Psoas muscle (tissue), 8 donors: ENCODE measurements at regions of chr6 and their contacts with region 1.

Region 1: DNA sequence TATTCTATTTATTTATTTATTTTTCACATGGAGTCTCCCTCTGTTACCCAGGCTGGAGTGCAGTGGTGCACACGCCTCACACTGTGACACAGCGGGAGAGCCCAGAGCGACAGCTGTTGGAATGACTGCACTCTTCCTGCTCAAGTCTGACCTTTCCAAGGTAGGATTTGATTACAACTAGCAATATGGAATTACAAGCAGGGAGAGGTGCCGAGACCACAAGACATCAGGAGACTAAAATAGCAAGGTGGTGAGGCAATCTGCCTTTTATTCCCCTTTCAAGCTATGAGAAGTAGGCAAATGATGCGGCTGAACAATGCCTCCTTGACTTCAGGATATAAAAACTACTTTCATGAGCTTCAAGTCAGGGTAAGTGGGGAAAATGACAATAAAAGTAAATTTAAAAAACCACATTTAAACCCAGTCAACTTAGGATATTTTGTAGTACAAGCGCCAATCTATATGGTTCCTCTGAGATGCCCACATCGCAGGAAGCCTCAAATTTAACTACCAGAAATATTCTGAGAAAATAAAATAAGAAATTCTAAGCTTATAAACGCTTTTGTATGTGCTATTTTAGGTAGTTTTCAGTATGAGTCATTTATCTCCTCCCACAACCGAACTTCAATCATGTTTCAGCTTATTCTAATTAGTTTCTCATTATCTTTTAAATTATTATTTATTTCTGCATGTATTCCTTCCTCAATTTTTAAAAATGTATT is 146.9 kb upstream of the SGK1 start:
- DNase-seq: peak; percentile 42 to 84
- ATAC-seq: peak; percentile 92 to 98 (median 95)
- H3K4me3 ChIP-seq: no peak overlapping the region
- H3K27ac ChIP-seq: peak overlapping the region; percentile 87
- H3K4me1 ChIP-seq: peaks cover 50% of the 10 kb centered on the region
- H3K27me3 ChIP-seq: no peaks in the 10 kb centered on the region
- CTCF ChIP-seq: no peak

Region 2: DNA sequence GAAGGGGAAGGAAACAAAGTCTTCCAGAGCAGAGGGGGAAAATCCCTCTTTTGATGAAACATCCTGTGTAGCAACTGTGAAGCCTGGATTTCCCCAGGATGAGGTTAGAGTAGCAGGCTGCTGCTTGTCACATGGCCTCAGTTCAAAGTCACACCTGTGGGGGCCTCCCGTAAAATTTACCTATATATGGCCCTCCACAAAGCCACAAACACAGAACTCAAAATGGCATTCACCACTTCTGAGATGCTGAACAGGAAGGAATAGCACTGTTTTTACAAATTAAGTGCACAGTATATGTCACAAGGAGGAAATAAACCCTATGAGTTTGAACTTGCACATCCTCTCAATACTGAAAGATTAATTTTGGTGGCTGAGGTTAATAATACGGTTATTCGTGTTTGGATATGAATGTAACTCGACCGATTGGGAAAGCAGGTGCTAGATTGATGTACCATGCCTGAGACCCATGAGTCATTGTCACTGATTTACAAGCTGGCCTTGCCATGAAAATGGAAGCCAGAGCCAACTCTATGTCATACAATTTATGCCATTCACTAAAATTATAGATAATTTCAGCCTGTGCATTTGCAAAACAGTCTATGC is 217.5 kb before region 1 on chr6:
- intact Hi-C with region 1: loop called in 1 of 2 experiments (anchors 5 kb)
- DNase-seq: no peak
- ATAC-seq: peak; percentile 91 to 96 (median 93)
- H3K4me3 ChIP-seq: no peak overlapping the region
- H3K27ac ChIP-seq: peak overlapping the region; percentile 83
- H3K4me1 ChIP-seq: peaks cover 31% of the 10 kb centered on the region
- H3K27me3 ChIP-seq: no peaks in the 10 kb centered on the region
- CTCF ChIP-seq: no peak

Region 3: GRCh38 chr6:134347916-134348805 is 116.7 kb before region 1 on chr6:
- intact Hi-C with region 1: loop called (anchors 1 to 5 kb)
- DNase-seq: peak; percentile 72 to 75
- ATAC-seq: peak; percentile 78 to 81 (median 79)
- H3K4me3 ChIP-seq: peak overlapping the region; percentile 48
- H3K27ac ChIP-seq: peak overlapping the region; percentile 92
- H3K4me1 ChIP-seq: peaks cover 37% of the 10 kb centered on the region
- H3K27me3 ChIP-seq: no peaks in the 10 kb centered on the region
- CTCF ChIP-seq: no peak

Region 4: DNA sequence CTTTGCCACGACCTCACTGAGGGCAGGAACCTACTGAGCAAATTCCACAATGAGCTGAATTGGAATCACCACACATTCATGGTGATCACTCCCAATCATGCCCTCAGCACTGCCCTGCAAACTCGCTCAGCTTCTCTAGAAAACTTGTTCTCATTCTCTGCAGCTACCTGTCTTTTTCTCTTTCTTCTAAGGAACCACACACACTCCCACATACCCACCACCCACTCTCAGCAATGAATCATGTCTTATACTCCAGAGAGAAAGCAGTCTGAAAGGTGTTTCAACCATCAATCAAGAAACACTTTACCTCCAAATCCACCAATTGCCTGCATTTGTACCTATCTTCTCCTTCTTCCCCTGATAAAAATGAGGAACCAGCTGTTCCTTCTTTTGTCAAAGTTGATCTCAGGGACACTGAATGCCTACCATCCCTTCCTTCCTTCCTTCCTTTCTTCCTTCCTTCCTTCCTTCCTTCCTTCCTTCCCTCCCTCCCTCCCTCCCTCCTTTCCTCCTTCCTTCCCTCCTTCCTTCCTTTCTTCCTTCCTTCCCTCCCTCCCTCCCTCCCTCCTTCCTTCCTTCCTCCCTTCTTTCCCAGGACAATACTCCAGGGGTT is 62.4 kb before region 1 on chr6:
- intact Hi-C with region 1: loop called in 1 of 2 experiments (anchors 5 kb)
- DNase-seq: no peak
- ATAC-seq: no peak
- H3K4me3 ChIP-seq: no peak overlapping the region
- H3K27ac ChIP-seq: peak overlapping the region; percentile 54
- H3K4me1 ChIP-seq: peaks cover 13% of the 10 kb centered on the region
- H3K27me3 ChIP-seq: no peaks in the 10 kb centered on the region
- CTCF ChIP-seq: no peak

Region 5: GRCh38 chr6:134529921-134530320 is 65.1 kb after region 1 on chr6:
- intact Hi-C with region 1: loop called in 1 of 2 experiments (anchors 5 kb)
- DNase-seq: no peak
- ATAC-seq: no peak
- H3K4me3 ChIP-seq: no peak overlapping the region
- H3K27ac ChIP-seq: no peak overlapping the region
- H3K4me1 ChIP-seq: peaks cover 22% of the 10 kb centered on the region
- H3K27me3 ChIP-seq: no peaks in the 10 kb centered on the region
- CTCF ChIP-seq: no peak

Region 6: GRCh38 chr6:134640975-134641429 is 176.2 kb after region 1 on chr6:
- intact Hi-C with region 1: loop called (anchors 5 kb)
- DNase-seq: peak; percentile 76 to 86
- ATAC-seq: peak; percentile 95 to 98 (median 96)
- H3K4me3 ChIP-seq: no peak overlapping the region
- H3K27ac ChIP-seq: peak overlapping the region; percentile 75
- H3K4me1 ChIP-seq: peaks cover 20% of the 10 kb centered on the region
- H3K27me3 ChIP-seq: no peaks in the 10 kb centered on the region
- CTCF ChIP-seq: peak; percentile 97

Region 7: DNA sequence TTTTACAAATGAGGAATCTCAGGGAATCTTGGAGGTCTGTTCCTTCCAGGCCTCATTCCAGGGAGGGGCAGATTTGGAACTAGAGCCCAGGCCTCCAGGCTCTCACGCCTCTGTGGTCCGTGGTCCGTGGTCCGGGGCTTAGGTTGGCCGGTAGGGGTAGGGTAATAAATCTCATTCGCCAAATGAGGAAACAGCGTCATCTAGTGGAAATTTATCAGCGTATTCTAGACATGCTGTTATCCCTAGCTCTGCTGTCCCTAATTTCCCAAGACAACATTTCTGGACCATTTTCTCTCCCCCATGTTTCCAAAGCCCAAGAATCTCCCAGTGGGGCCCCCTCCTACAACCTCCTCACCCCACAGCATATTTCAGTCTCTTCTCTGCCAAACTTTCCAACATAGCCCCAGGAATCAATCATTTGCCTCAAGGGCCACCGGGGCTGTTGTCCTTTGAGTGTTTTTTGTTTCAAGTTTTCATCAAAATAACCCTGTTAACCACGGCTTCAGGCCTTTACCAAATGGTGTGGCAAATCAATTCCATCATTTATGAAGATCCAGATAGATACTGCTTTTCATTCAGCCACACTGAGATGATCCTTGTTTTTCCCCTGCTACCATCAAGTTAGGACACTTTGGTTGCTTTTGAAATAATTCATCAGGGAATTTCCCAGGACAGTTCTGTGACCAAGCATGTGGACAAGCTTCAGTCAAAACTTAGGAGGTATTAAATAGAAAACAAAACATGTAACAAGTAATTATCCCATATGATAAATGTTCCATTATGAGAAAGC is 358.3 kb after region 1 on chr6:
- intact Hi-C with region 1: loop called in 1 of 2 experiments (anchors 5 kb)
- DNase-seq: no peak
- ATAC-seq: peak; percentile 66 to 84 (median 70)
- H3K4me3 ChIP-seq: no peak overlapping the region
- H3K27ac ChIP-seq: peak overlapping the region; percentile 3
- H3K4me1 ChIP-seq: peaks cover 5% of the 10 kb centered on the region
- H3K27me3 ChIP-seq: no peaks in the 10 kb centered on the region
- CTCF ChIP-seq: peak; percentile 86